Activated CD4-positive, alpha-beta memory T cell treated with anti-CD3 and anti-CD28 coated beads, Interleukin-2, amount 10 ng/mL, durations not matched to agents 7 days and 5 days (primary cell): ENCODE measurements at regions of chr6 and their contacts with region 1.

Region 1: GRCh38 chr6:26156076-26156849 is 69.0 kb downstream of the HFE start:
- DNase-seq: peak; percentile 91
- H3K4me3 Mint-ChIP-seq: peak overlapping the region; percentile 95
- H3K27ac Mint-ChIP-seq: peak overlapping the region; percentile 98
- H3K4me1 Mint-ChIP-seq: peaks cover 45% of the 10 kb centered on the region
- H3K27me3 Mint-ChIP-seq: no peaks in the 10 kb centered on the region

Region 2: DNA sequence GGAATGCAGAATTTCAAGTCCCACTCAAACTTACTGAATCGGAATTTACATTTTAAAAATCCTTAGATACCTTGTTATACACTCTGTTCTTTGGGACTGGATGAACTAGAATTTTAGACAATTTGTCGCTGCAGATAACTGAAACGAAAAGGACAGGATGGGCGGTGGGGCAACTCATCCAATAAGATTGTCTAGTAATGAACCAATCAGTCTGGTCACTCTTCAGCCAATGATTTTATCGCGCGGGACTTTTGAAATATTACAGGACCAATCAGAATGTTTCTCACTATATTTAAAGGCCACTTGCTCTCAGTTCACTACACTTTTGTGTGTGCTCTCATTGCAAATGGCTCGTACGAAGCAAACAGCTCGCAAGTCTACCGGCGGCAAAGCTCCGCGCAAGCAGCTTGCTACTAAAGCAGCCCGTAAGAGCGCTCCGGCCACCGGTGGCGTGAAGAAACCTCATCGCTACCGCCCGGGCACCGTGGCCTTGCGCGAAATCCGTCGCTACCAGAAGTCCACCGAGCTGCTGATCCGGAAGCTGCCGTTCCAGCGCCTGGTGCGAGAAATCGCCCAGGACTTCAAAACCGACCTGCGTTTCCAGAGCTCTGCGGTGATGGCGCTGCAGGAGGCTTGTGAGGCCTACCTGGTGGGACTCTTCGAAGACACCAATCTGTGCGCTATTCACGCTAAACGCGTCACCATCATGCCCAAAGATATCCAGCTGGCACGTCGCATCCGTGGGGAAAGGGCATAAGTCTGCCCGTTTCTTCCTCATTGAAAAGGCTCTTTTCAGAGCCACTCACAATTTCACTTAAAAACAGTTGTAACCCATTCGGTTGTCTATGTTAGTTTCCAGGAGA is 111.0 kb before region 1 on chr6:
- CTCF ChIA-PET with region 1: no interaction called
- POLR2A ChIA-PET with region 1: interaction called, 240 read pairs
- DNase-seq: peak; percentile 82
- H3K4me3 Mint-ChIP-seq: peak overlapping the region; percentile 79
- H3K27ac Mint-ChIP-seq: peak overlapping the region; percentile 99
- H3K4me1 Mint-ChIP-seq: peaks cover 44% of the 10 kb centered on the region
- H3K27me3 Mint-ChIP-seq: no peaks in the 10 kb centered on the region

Region 3: DNA sequence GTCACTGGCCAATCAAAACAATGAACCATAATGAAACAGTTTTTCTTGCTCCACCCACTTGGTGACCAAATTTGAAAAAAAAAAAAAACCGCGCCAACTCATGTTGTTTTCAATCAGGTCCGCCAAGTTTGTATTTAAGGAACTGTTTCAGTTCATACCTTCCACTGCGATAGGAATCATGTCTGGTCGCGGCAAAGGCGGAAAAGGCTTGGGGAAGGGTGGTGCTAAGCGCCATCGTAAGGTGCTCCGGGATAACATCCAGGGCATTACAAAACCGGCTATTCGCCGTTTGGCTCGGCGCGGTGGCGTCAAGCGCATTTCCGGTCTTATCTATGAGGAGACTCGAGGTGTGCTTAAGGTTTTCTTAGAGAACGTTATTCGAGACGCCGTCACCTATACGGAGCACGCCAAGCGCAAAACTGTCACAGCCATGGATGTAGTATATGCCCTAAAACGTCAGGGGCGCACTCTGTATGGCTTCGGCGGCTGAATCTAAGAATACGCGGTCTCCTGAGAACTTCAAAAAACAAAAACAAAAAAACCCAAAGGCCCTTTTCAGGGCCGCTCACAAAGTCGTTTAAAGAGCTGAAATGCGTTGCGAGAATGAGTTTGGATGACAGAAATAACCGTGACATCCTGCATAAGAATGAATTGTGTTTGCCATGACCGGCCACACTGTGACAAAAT is 52.4 kb before region 1 on chr6:
- CTCF ChIA-PET with region 1: no interaction called
- POLR2A ChIA-PET with region 1: interaction called, 140 read pairs
- DNase-seq: peak; percentile 93
- H3K4me3 Mint-ChIP-seq: peak overlapping the region; percentile 80
- H3K27ac Mint-ChIP-seq: peak overlapping the region; percentile 99
- H3K4me1 Mint-ChIP-seq: peaks cover 23% of the 10 kb centered on the region
- H3K27me3 Mint-ChIP-seq: no peaks in the 10 kb centered on the region

Region 4: DNA sequence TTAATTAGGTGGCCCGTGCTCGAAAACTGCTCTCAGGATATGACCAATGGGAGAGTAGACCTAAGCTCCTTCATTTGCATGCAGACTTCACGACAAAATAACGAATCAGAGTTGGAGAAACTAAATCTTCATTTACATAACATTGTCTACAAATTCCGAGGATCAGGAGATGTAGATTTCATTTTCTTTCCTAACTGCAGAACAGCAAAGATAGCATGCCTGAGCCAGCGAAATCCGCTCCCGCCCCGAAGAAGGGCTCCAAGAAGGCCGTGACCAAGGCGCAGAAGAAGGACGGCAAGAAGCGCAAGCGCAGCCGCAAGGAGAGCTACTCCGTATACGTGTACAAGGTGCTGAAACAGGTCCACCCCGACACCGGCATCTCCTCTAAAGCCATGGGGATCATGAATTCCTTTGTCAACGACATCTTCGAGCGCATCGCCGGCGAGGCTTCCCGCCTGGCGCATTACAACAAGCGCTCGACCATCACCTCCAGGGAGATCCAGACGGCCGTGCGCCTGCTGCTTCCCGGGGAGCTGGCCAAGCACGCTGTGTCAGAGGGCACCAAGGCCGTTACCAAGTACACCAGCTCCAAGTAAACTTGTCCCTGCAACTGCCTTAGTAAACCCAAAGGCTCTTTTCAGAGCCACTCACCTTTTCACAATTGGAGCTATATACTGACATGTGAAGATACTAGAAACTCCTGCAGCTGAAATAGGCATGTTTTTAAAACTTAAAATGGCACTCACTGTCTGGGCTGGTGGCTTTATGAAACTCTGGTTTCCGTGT is 27.5 kb after region 1 on chr6:
- CTCF ChIA-PET with region 1: interaction called, 11 read pairs
- POLR2A ChIA-PET with region 1: interaction called, 1,293 read pairs
- DNase-seq: peak; percentile 78
- H3K4me3 Mint-ChIP-seq: peak overlapping the region; percentile 75
- H3K27ac Mint-ChIP-seq: peak overlapping the region; percentile 92
- H3K4me1 Mint-ChIP-seq: peaks cover 71% of the 10 kb centered on the region
- H3K27me3 Mint-ChIP-seq: no peaks in the 10 kb centered on the region

Region 5: DNA sequence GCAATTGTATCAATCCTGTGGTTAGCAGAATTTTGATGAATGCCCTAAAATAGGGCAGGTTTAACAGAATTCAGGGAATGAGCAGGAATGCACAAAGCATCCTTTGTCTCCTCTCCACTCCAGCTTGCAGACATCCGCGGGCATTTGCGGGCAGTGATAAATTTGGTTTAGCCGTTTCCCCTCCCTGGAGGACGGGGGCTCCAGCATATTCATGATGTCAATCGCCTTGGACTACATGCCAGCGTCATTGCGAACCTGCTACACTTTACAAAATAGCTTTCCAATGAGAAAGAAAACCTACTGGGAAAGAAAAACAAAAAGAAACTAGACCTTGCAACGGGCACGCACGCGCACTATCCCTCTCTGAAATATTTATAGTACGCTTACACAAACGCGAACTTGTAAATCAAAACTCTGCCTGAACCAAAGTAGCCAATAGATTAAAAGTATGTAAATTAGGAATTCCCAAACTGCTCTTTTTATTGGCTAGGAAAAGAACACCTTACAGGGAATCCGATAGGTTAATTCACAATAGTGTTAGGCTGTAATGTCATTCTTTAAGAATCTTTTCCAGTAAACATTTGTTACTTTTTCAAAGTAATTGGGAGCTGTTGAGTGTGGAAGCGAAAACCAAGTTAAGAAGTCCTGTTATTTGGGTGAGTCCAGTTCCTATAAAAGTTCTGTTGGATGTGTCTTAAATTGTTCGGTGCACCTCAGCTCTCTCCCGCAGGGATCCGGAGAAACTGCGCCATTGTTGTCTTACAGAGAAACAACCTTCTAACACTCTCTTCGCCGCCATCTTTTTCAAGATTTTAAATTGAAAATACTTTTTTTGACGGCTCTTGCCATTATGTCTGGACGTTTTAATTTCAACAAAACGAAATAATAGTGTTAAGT is 67.6 kb after region 1 on chr6:
- CTCF ChIA-PET with region 1: no interaction called
- POLR2A ChIA-PET with region 1: interaction called, 77 read pairs
- DNase-seq: peak; percentile 72
- H3K4me3 Mint-ChIP-seq: no peak overlapping the region
- H3K27ac Mint-ChIP-seq: no peak overlapping the region
- H3K4me1 Mint-ChIP-seq: peaks cover 31% of the 10 kb centered on the region
- H3K27me3 Mint-ChIP-seq: no peaks in the 10 kb centered on the region

Region 6: DNA sequence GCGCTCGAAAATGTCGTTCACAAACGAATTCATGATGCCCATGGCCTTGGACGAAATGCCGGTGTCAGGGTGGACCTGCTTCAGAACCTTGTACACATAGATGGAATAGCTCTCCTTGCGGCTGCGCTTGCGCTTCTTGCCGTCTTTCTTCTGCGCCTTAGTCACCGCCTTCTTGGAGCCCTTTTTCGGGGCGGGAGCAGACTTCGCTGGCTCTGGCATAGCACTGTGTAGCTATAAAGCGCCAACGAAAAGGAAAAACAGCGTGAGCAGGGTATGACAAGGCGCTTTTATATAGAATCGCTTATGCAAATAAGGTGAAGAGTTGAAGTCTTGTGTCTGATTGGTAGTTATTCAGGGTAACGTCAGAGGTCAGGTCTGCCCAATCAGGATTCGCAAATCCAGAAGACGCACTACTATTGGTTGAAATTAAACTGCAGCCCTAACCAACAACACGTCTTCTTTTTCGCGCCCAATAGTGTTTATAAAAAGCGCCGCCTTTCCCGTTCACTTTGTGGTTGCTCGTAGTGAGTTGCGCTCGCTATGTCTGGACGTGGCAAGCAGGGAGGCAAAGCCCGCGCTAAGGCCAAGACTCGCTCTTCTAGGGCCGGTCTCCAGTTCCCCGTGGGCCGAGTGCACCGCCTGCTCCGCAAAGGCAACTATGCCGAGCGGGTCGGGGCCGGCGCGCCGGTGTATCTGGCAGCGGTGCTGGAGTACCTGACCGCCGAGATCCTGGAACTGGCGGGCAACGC is 976.4 kb after region 1 on chr6:
- CTCF ChIA-PET with region 1: no interaction called
- POLR2A ChIA-PET with region 1: interaction called, 68 read pairs
- DNase-seq: peak; percentile 95
- H3K4me3 Mint-ChIP-seq: no peak overlapping the region
- H3K27ac Mint-ChIP-seq: no peak overlapping the region
- H3K4me1 Mint-ChIP-seq: peaks cover 60% of the 10 kb centered on the region
- H3K27me3 Mint-ChIP-seq: no peaks in the 10 kb centered on the region